Breast epithelium (tissue), 4 donors: ENCODE measurements at regions of chr15 and their contacts with region 1.

Region 1: GRCh38 chr15:99818872-99819271 is 85.6 kb upstream of the LYSMD4 start:
- DNase-seq: no peak
- H3K4me3 ChIP-seq: no peak overlapping the region
- H3K27ac ChIP-seq: no peak overlapping the region
- H3K4me1 ChIP-seq: no peaks in the 10 kb centered on the region
- H3K27me3 ChIP-seq: no peaks in the 10 kb centered on the region
- CTCF ChIP-seq: no peak
- POLR2A ChIP-seq: no peak

Region 2: GRCh38 chr15:98996169-98996568 is 822.7 kb before region 1 on chr15:
- intact Hi-C with region 1: loop called (anchors 10 kb)
- DNase-seq: no peak
- H3K4me3 ChIP-seq: no peak overlapping the region
- H3K27ac ChIP-seq: no peak overlapping the region
- H3K4me1 ChIP-seq: no peaks in the 10 kb centered on the region
- H3K27me3 ChIP-seq: no peaks in the 10 kb centered on the region
- CTCF ChIP-seq: no peak
- POLR2A ChIP-seq: no peak